ENCODE measurements at regions of chr1 and their contacts with region 1.

Region 1: DNA sequence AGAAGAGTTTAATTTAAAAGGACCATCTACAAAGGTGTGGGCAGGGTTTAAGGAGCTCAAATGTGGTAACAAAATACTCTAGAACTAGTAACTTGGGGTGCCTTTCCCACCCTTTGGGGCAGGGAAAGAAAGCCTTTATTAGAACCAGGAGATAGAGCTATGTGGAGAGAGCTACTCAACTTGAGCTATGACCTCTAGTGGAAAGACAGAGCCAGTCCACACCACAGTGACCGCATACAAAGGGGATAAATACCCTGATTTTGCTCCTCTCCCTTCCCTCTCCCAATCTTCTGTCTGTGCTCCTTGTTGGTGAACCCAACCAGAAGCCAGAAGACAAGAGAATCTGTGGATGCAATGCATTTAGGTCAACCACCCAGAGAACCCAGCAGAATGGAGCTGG is 54.4 kb upstream of the JAK1 start:
- DNase-seq: peak in 2 of 4 experiments; percentile 33 to 51
- ATAC-seq: peak; percentile 95
- H3K4me3 ChIP-seq: no peak overlapping the region
- H3K27ac ChIP-seq: no peak overlapping the region; the same call in 2 of the 3 replicates
- H3K4me1 ChIP-seq: peaks cover 0 to 19% of the 10 kb centered on the region in 2 experiments; a peak in 2 of 5 replicates
- H3K27me3 ChIP-seq: no peaks in the 10 kb centered on the region
- CTCF ChIP-seq: peak; percentile 56 to 63 (median 58)
- EP300 ChIP-seq: no peak
- POLR2A ChIP-seq: no peak
- RAD21 ChIP-seq: peak; percentile 38 to 68

Region 2: DNA sequence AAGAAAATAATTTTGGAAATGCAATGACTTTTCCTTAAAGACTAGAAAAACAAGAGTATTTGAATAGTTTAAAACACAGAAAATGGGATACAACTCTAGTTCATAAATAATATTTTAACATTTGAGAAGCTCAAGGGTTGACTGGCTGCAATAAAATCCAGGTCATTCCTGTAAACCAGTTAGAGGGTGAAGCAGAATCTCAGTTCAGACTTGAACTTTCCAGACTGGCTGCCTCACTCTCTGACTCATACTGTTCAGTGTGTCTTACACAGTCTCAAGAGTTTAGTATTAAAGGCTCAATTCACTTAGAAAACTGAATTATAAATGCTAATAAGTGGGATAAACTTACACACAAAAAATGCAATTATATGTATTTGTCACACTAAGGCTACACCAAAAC is 186.0 kb before region 1 on chr1:
- CTCF ChIA-PET with region 1: no interaction called
- POLR2A ChIA-PET with region 1: no interaction called
- in situ Hi-C with region 1: no loop called
- intact Hi-C with region 1: loop called (anchors 5 kb)
- DNase-seq: no peak
- ATAC-seq: no peak
- H3K4me3 ChIP-seq: no peak overlapping the region
- H3K27ac ChIP-seq: no peak overlapping the region
- H3K4me1 ChIP-seq: no peaks in the 10 kb centered on the region
- H3K27me3 ChIP-seq: no peaks in the 10 kb centered on the region
- CTCF ChIP-seq: no peak
- EP300 ChIP-seq: no peak
- POLR2A ChIP-seq: no peak
- RAD21 ChIP-seq: no peak

Region 3: GRCh38 chr1:65009724-65010420 is 10.9 kb before region 1 on chr1:
- CTCF ChIA-PET with region 1: no interaction called
- POLR2A ChIA-PET with region 1: interaction called, 16 read pairs
- in situ Hi-C with region 1: no loop called
- intact Hi-C with region 1: no loop called
- DNase-seq: no peak
- ATAC-seq: no peak
- H3K4me3 ChIP-seq: no peak overlapping the region
- H3K27ac ChIP-seq: no peak overlapping the region
- H3K4me1 ChIP-seq: no peaks in the 10 kb centered on the region
- H3K27me3 ChIP-seq: no peaks in the 10 kb centered on the region
- CTCF ChIP-seq: no peak
- EP300 ChIP-seq: no peak
- POLR2A ChIP-seq: no peak
- RAD21 ChIP-seq: no peak

Region 4: GRCh38 chr1:65083263-65083896 is 62.6 kb after region 1 on chr1:
- CTCF ChIA-PET with region 1: no interaction called
- POLR2A ChIA-PET with region 1: no interaction called
- in situ Hi-C with region 1: no loop called
- intact Hi-C with region 1: no loop called
- DNase-seq: peak in 3 of 4 experiments; percentile 8 to 72 (median 49)
- ATAC-seq: peak; percentile 95
- H3K4me3 ChIP-seq: no peak overlapping the region
- H3K27ac ChIP-seq: peak overlapping the region; percentile 38; the same call in 2 of the 3 replicates
- H3K4me1 ChIP-seq: peaks cover 5 to 10% of the 10 kb centered on the region in 2 experiments; a peak in 3 of 5 replicates
- H3K27me3 ChIP-seq: no peaks in the 10 kb centered on the region
- CTCF ChIP-seq: no peak
- EP300 ChIP-seq: peak; percentile 70; the same call in 1 of the 2 replicates
- POLR2A ChIP-seq: no peak
- RAD21 ChIP-seq: no peak